CD8-positive, alpha-beta T cell (primary cell): ENCODE measurements at regions of chr17 and their contacts with region 1.

Region 1: DNA sequence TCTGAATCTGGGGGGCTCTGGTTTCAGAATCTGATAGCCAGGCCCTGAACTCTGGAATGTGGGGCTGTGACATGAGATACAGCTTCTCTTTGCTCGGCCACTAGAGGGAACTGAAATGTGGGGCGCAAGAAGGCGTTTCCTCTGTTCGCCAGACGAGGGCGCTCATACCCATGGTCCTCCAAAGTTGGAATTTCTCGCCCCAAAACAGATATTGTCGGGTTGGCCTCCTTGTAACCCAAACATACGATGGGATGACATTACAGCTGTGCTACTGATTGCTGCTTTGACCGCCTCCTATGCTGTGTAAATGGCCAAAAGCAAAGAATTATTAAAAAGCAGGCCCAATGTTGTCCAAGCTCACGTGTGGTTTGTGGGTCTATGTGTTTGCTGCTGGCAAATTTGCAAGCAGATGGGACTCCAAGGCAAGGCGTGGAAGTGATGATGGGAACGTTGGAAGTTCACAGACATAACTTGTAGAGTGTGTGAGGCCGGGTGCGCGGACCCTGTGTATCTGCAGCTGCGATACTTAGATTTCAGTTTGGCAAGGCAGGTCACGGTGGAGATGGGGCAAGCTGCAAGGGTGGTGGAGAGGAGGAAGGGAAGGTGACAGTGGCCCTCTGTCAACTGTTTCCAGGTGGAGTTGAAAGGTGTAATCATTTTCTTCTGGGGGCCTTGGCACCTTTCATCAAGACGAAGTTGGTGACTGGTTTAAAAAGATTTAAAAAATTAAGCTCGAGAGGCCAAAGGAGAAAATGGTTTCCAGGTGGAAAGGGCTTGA is 13.0 kb upstream of the MSI2 start:
- DNase-seq: peak; percentile 60 to 86 (median 77)
- ATAC-seq: peak; percentile 97
- H3K4me3 ChIP-seq: no peak overlapping the region
- H3K4me3 Mint-ChIP-seq: no peak overlapping the region
- H3K27ac ChIP-seq: no peak overlapping the region
- H3K27ac Mint-ChIP-seq: no peak overlapping the region
- H3K4me1 ChIP-seq: no peaks in the 10 kb centered on the region
- H3K4me1 Mint-ChIP-seq: peaks cover 2% of the 10 kb centered on the region
- H3K27me3 ChIP-seq: no peaks in the 10 kb centered on the region
- H3K27me3 Mint-ChIP-seq: no peaks in the 10 kb centered on the region
- CTCF ChIP-seq: peak; percentile 99

Region 2: DNA sequence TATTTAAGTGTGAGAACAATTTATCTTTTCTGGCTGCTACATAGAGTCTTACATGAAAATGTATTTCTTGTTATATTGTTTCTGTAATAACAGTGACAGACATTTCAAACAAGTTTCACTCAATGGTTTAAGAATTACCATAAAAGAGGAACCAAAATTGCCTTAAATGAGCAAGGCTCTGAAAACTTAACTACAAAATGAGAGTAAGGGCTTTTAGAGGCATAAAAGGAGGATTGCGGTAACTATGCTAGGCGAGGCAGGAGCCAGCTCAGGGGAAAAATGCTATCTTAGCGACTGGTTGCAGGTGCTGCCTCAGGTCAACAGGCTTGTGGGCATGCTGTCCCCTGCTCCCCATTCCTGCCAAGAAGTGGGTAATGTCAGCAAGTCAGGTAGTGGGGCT is 68.8 kb before region 1 on chr17:
- CTCF ChIA-PET with region 1: no interaction called
- POLR2A ChIA-PET with region 1: no interaction called
- intact Hi-C with region 1: no loop called
- DNase-seq: no peak
- ATAC-seq: no peak
- H3K4me3 ChIP-seq: no peak overlapping the region
- H3K4me3 Mint-ChIP-seq: no peak overlapping the region
- H3K27ac ChIP-seq: no peak overlapping the region
- H3K27ac Mint-ChIP-seq: no peak overlapping the region
- H3K4me1 ChIP-seq: no peaks in the 10 kb centered on the region
- H3K4me1 Mint-ChIP-seq: no peaks in the 10 kb centered on the region
- H3K27me3 ChIP-seq: no peaks in the 10 kb centered on the region
- H3K27me3 Mint-ChIP-seq: peaks cover 14% of the 10 kb centered on the region
- CTCF ChIP-seq: no peak

Region 3: DNA sequence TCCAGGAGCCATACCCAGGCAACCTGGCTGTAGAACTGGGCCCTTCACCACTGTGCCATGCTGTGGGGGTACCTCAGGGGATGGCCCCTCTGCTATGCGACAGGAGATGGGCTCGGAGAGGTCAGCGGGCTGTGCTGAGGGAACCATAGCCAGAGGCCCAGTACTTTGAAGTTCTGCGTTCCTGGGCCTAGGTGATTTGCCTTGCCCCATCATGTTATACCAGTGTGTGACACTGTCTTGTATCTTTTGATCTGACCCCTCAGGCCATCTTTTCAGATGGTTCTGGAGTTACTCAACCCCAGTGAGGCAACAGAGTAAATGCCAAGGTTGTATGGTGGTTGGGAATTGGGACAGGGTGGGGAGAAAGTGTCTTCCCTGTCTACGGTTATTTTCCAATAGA is 21.4 kb after region 1 on chr17:
- CTCF ChIA-PET with region 1: interaction called, 93 read pairs
- POLR2A ChIA-PET with region 1: no interaction called
- intact Hi-C with region 1: no loop called
- DNase-seq: no peak
- ATAC-seq: no peak
- H3K4me3 ChIP-seq: no peak overlapping the region
- H3K4me3 Mint-ChIP-seq: no peak overlapping the region
- H3K27ac ChIP-seq: no peak overlapping the region
- H3K27ac Mint-ChIP-seq: no peak overlapping the region
- H3K4me1 ChIP-seq: peaks cover 31% of the 10 kb centered on the region
- H3K4me1 Mint-ChIP-seq: peaks cover 80% of the 10 kb centered on the region
- H3K27me3 ChIP-seq: no peaks in the 10 kb centered on the region
- H3K27me3 Mint-ChIP-seq: no peaks in the 10 kb centered on the region
- CTCF ChIP-seq: no peak

Region 4: DNA sequence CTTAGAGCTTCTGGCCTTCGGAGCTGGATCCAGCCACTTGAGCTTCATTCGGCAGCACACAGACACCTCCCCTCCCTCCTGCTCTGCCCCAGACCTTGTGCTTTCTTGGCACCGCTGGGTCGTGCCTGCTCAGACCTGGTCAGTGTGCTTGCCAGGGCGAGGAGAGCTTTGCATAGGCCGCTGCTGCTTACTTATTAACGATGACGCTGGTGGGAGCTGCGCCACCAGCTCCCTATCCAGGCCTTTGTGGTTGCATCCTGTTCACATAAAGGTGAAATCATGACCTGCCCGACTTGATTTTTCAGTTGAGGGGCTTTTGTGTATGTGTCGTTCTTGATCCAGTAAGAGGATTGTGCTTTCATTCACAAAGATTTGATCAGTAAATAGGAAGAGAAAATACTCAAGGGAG is 114.0 kb after region 1 on chr17:
- CTCF ChIA-PET with region 1: interaction called, 14 read pairs
- POLR2A ChIA-PET with region 1: no interaction called
- intact Hi-C with region 1: no loop called
- DNase-seq: no peak
- ATAC-seq: no peak
- H3K4me3 ChIP-seq: no peak overlapping the region
- H3K4me3 Mint-ChIP-seq: peak overlapping the region; percentile 43
- H3K27ac ChIP-seq: no peak overlapping the region
- H3K27ac Mint-ChIP-seq: peak overlapping the region; percentile 72
- H3K4me1 ChIP-seq: peaks cover 51% of the 10 kb centered on the region
- H3K4me1 Mint-ChIP-seq: peaks cover 65% of the 10 kb centered on the region
- H3K27me3 ChIP-seq: no peaks in the 10 kb centered on the region
- H3K27me3 Mint-ChIP-seq: no peaks in the 10 kb centered on the region
- CTCF ChIP-seq: no peak

Region 5: GRCh38 chr17:57455063-57455914 is 211.9 kb after region 1 on chr17:
- CTCF ChIA-PET with region 1: interaction called, 15 read pairs
- POLR2A ChIA-PET with region 1: no interaction called
- intact Hi-C with region 1: no loop called
- DNase-seq: peak in 8 of 9 experiments; percentile 9 to 72 (median 46)
- ATAC-seq: peak; percentile 78
- H3K4me3 ChIP-seq: peak overlapping the region in 1 of 2 experiments; percentile 3
- H3K4me3 Mint-ChIP-seq: peak overlapping the region; percentile 71
- H3K27ac ChIP-seq: peak overlapping the region in 1 of 2 experiments; percentile 38
- H3K27ac Mint-ChIP-seq: peak overlapping the region; percentile 89
- H3K4me1 ChIP-seq: peaks cover 46% of the 10 kb centered on the region
- H3K4me1 Mint-ChIP-seq: peaks cover 66% of the 10 kb centered on the region
- H3K27me3 ChIP-seq: no peaks in the 10 kb centered on the region
- H3K27me3 Mint-ChIP-seq: no peaks in the 10 kb centered on the region
- CTCF ChIP-seq: no peak

Region 6: GRCh38 chr17:57671667-57672632 is 428.6 kb after region 1 on chr17:
- CTCF ChIA-PET with region 1: interaction called, 33 read pairs
- POLR2A ChIA-PET with region 1: no interaction called
- intact Hi-C with region 1: loop called (anchors 1 kb)
- DNase-seq: peak; percentile 46 to 87 (median 75)
- ATAC-seq: peak; percentile 87
- H3K4me3 ChIP-seq: no peak overlapping the region
- H3K4me3 Mint-ChIP-seq: peak overlapping the region; percentile 54
- H3K27ac ChIP-seq: peak overlapping the region; percentile 28 to 45
- H3K27ac Mint-ChIP-seq: peak overlapping the region; percentile 91
- H3K4me1 ChIP-seq: peaks cover 36% of the 10 kb centered on the region
- H3K4me1 Mint-ChIP-seq: peaks cover 45% of the 10 kb centered on the region
- H3K27me3 ChIP-seq: no peaks in the 10 kb centered on the region
- H3K27me3 Mint-ChIP-seq: no peaks in the 10 kb centered on the region
- CTCF ChIP-seq: peak; percentile 81

Region 7: DNA sequence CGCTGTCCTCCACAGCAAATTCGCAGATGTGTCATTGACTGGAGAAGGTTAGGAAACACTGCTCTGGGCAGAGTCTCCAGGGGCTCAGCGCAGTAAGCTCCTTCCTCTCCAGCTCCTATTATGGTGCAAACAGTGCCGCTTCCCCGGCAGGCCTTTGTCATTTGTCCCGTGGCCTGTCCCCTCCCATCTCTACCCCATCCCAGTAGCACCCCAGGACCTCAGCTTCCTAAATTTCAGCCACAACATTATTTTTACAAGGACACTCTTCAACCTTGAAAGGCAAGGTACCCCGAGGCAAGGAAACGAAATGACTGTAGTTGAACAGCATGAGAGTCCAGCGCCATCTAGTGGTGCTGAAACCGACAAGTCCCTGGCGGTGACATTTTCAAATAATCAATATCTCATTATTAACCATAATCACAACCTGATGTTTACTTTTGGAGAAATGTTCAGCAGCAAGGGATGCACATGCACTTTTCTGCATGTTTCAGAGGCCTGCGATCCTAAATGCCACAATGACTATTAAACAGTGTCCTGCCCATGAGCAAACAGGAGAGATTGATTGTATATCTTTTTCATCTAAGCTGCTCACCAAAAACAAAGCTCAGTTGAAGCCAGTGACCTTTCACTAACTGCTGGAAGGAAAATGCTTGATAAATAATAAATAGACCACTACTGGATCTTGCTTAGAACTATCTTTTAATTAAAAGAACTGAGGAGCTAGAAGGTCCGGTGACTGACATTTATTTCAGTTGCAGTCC is 590.0 kb after region 1 on chr17:
- CTCF ChIA-PET with region 1: interaction called, 32 read pairs
- POLR2A ChIA-PET with region 1: no interaction called
- intact Hi-C with region 1: loop called (anchors 1 to 2 kb)
- DNase-seq: peak; percentile 42 to 83 (median 70)
- ATAC-seq: peak; percentile 70
- H3K4me3 ChIP-seq: peak overlapping the region; percentile 30 to 34
- H3K4me3 Mint-ChIP-seq: no peak overlapping the region
- H3K27ac ChIP-seq: no peak overlapping the region
- H3K27ac Mint-ChIP-seq: no peak overlapping the region
- H3K4me1 ChIP-seq: peaks cover 4% of the 10 kb centered on the region
- H3K4me1 Mint-ChIP-seq: peaks cover 7% of the 10 kb centered on the region
- H3K27me3 ChIP-seq: no peaks in the 10 kb centered on the region
- H3K27me3 Mint-ChIP-seq: no peaks in the 10 kb centered on the region
- CTCF ChIP-seq: peak; percentile 96